ENCODE measurements at regions of chr9 and their contacts with region 1.

Region 1: DNA sequence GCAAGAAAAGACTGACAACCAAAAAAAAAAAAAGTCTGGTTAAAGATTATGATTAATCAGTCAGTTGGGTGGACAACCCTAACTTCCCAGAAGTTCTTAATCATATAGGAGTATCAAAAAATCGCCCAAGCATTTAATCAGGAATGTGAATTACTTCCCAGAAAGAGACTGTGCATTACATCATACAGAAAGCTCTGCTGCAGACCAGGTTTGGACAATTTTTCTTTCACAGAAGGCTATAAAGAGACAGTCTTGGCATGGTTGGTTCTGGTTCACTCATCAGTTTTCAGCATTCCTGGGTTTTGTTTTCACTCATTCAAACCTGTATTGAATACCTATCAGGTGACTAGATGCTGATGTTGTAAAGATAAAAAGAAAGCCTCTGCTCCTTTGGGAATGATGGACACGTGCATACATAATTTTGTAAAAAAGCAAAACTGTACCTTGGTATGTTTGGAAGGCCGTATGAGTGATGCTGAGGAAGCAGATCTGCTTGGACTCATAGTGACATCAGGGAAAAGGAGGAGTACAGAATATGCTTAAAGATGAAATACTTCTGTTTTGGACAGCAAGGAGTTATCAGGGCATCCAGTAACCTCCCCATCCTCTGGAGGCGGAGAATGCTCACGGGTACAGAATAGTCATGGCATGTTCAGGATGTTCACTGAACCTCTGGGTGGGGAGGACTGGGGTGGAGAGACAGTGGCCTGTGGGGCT is 178.4 kb downstream of the GNA14 start:
- DNase-seq: no peak
- H3K4me3 ChIP-seq: no peak overlapping the region
- H3K27ac ChIP-seq: no peak overlapping the region
- H3K27me3 ChIP-seq: no peaks in the 10 kb centered on the region
- CTCF ChIP-seq: no peak

Region 2: GRCh38 chr9:77417566-77417965 is 52.1 kb before region 1 on chr9:
- intact Hi-C with region 1: no loop called
- DNase-seq: no peak
- H3K4me3 ChIP-seq: no peak overlapping the region
- H3K27ac ChIP-seq: peak overlapping the region in 27 of 59 donors; percentile 3 to 66 (median 31)
- H3K27me3 ChIP-seq: no peaks in the 10 kb centered on the region
- CTCF ChIP-seq: no peak

Region 3: DNA sequence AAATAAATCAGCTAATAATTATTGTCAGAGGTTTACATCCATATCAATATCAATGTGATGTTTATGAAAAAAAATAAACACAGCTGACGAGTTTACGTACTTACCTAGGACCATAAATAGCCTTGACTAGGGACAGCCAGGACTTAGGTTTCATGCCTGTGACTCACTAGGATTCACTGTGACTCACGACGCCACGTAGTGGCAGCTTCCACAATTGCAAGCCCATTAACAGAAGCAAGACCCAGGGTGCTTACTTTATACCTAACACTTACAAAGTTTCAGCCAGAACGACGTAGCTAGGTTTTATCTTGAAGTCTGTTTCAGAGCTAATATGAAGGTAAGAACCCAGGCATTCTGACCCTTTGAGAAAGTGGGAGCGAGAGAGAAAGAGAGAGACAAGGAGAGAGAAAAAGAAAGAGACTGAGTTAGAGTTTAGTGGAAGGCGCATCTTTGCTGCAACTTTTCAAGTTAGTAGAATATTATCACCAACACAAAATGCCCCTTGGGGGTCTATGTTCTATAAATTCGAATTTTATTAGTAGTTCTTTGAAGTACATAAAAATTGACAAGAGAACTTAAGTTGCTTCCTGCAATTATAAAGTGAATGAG is 12.7 kb before region 1 on chr9:
- intact Hi-C with region 1: no loop called
- DNase-seq: peak; percentile 43 to 93 (median 82)
- H3K4me3 ChIP-seq: no peak overlapping the region
- H3K27ac ChIP-seq: peak overlapping the region in 2 of 59 donors; percentile 14 to 60
- H3K27me3 ChIP-seq: no peaks in the 10 kb centered on the region
- CTCF ChIP-seq: peak; percentile 64 to 97 (median 90)

Region 4: GRCh38 chr9:77514886-77515711 is 45.4 kb after region 1 on chr9:
- intact Hi-C with region 1: loop called in 1 of 2 experiments (anchors 10 kb)
- DNase-seq: no peak
- H3K4me3 ChIP-seq: no peak overlapping the region
- H3K27ac ChIP-seq: peak overlapping the region in 51 of 59 donors; percentile 2 to 85 (median 57)
- H3K27me3 ChIP-seq: no peaks in the 10 kb centered on the region
- CTCF ChIP-seq: no peak

Measured in dorsolateral prefrontal cortex (tissue), 120 donors.